ENCODE measurements at regions of chr16 and their contacts with region 1.

Region 1: GRCh38 chr16:65754820-65755691 is 611.4 kb upstream of the CDH5 start:
- DNase-seq: peak; percentile 58 to 82 (median 75)
- H3K4me3 ChIP-seq: no peak overlapping the region
- H3K27ac ChIP-seq: no peak overlapping the region
- H3K4me1 ChIP-seq: peaks cover 12% of the 10 kb centered on the region
- H3K27me3 ChIP-seq: no peaks in the 10 kb centered on the region
- CTCF ChIP-seq: no peak
- EP300 ChIP-seq: no peak
- POLR2A ChIP-seq: no peak

Region 2: DNA sequence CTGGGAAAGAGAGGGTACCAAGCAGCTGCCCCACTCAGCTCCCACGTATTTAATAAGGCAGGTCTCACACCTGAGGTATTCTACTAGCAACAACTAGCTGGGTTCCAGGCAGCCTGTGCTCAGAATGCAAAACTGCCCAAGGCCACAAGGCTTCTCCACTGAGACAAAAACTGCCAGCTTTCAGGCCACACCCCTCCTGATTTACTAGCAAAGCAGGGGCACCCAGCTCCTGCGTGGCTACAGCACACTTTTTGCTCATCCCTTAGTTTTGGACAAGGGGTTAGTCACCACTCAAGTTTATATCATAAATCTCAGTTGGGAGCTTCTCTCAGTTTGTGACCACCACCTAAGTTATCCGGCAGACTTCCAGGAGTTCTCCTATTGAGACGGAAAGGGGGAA is 1127.8 kb before region 1 on chr16:
- intact Hi-C with region 1: loop called in 1 of 4 experiments (anchors 10 kb)
- DNase-seq: no peak
- H3K4me3 ChIP-seq: no peak overlapping the region
- H3K27ac ChIP-seq: no peak overlapping the region
- H3K4me1 ChIP-seq: no peaks in the 10 kb centered on the region
- H3K27me3 ChIP-seq: no peaks in the 10 kb centered on the region
- CTCF ChIP-seq: no peak
- EP300 ChIP-seq: no peak
- POLR2A ChIP-seq: no peak

Region 3: GRCh38 chr16:65538976-65539375 is 216.1 kb before region 1 on chr16:
- intact Hi-C with region 1: no loop called
- DNase-seq: no peak
- H3K4me3 ChIP-seq: no peak overlapping the region
- H3K27ac ChIP-seq: no peak overlapping the region
- H3K4me1 ChIP-seq: no peaks in the 10 kb centered on the region
- H3K27me3 ChIP-seq: no peaks in the 10 kb centered on the region
- CTCF ChIP-seq: no peak
- EP300 ChIP-seq: no peak
- POLR2A ChIP-seq: no peak

Region 4: DNA sequence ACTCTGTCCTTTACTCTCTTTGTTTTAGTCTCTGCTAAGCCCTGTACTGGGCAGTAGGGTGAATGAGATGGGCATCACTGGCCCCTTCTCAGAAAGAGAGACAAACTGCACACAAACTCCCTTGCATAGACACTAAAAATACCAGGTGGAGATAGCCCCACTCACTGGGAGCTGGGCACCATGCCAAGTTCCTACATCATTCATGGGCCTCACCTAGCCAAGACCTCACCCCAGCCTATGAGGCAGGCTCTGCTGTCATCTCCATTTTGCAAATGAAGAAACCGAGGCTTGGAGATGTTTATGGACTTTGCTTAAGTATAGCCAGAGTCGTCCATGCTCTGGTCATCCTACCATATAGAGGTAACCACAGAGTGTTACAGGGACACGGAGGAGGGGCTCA is 133.4 kb before region 1 on chr16:
- intact Hi-C with region 1: no loop called
- DNase-seq: peak in 2 of 5 donors; percentile 9 to 21
- H3K4me3 ChIP-seq: no peak overlapping the region
- H3K27ac ChIP-seq: no peak overlapping the region
- H3K4me1 ChIP-seq: no peaks in the 10 kb centered on the region
- H3K27me3 ChIP-seq: no peaks in the 10 kb centered on the region
- CTCF ChIP-seq: no peak
- EP300 ChIP-seq: no peak
- POLR2A ChIP-seq: no peak

Region 5: GRCh38 chr16:66266436-66267291 is 511.6 kb after region 1 on chr16:
- intact Hi-C with region 1: loop called in 1 of 4 experiments (anchors 10 kb)
- DNase-seq: peak; percentile 64 to 82 (median 76)
- H3K4me3 ChIP-seq: no peak overlapping the region
- H3K27ac ChIP-seq: peak overlapping the region in 1 of 2 donors; percentile 61
- H3K4me1 ChIP-seq: peaks cover 15% of the 10 kb centered on the region
- H3K27me3 ChIP-seq: no peaks in the 10 kb centered on the region
- CTCF ChIP-seq: peak in 1 of 3 donors; percentile 12
- EP300 ChIP-seq: no peak
- POLR2A ChIP-seq: no peak

Measured in ovary (tissue), 10 donors.